Endothelial cell of umbilical vein (primary cell): ENCODE measurements at regions of chr6 and their contacts with region 1.

Region 1: DNA sequence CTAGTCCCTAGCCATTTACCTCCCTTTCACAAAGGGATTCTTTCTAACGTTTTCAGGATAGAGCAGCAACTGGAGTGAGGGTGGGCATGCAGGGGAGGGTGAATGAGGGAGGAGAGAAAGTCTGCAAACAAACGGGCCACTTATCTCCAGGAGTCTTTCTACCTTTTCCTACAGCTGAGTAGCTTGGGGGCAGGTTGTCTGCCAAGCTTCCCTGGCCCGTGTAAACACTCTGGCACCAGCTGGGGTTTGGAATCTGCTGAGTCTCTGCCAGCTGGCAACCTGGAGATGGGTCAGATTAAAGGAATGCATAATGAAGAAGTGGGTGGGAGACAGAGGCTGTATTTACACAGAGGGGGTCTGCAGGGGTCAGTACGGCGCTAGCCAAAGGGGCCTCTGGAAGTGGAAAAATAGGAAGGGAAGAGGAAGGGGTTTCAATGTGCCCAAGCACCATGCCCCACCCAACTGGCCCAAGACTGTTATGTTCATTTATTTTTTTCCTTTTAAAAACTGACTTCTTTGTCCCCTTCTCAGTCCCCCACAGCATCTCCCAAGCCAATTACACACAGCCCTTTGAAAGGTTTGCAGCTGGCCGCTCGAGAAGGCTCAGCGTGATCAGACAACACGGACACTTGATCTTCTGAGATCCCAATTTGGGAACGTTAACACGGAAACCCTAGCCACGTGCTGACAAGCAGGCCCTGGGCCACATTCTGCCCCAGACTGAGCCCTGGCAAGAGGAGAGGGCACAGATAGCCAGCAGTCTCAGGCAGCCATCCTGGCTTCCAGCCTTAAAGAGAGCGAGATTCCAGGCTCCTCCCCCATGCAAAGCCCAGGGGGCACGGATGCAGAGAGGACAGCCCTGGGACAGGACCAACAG is 25.2 kb downstream of the TRAM2 start:
- DNase-seq: peak; percentile 94
- H3K4me3 ChIP-seq: no peak overlapping the region
- H3K27ac ChIP-seq: peak overlapping the region; percentile 82
- H3K4me1 ChIP-seq: peaks cover 60% of the 10 kb centered on the region
- H3K27me3 ChIP-seq: no peaks in the 10 kb centered on the region
- CTCF ChIP-seq: no peak
- POLR2A ChIP-seq: no peak

Region 2: GRCh38 chr6:52512199-52512598 is 39.4 kb before region 1 on chr6:
- CTCF ChIA-PET with region 1: interaction called, 4 read pairs
- POLR2A ChIA-PET with region 1: interaction called, 3 read pairs
- dilution Hi-C with region 1: no loop called
- intact Hi-C with region 1: loop called (anchors 1 kb)
- DNase-seq: peak; percentile 92
- H3K4me3 ChIP-seq: no peak overlapping the region
- H3K27ac ChIP-seq: peak overlapping the region; percentile 89
- H3K4me1 ChIP-seq: peaks cover 64% of the 10 kb centered on the region
- H3K27me3 ChIP-seq: no peaks in the 10 kb centered on the region
- CTCF ChIP-seq: no peak
- POLR2A ChIP-seq: no peak

Region 3: GRCh38 chr6:52537001-52537753 is 14.5 kb before region 1 on chr6:
- CTCF ChIA-PET with region 1: interaction called, 4 read pairs
- POLR2A ChIA-PET with region 1: no interaction called
- dilution Hi-C with region 1: no loop called
- intact Hi-C with region 1: loop called (anchors 1 kb)
- DNase-seq: peak; percentile 78
- H3K4me3 ChIP-seq: no peak overlapping the region
- H3K27ac ChIP-seq: peak overlapping the region; percentile 74
- H3K4me1 ChIP-seq: peaks cover 83% of the 10 kb centered on the region
- H3K27me3 ChIP-seq: no peaks in the 10 kb centered on the region
- CTCF ChIP-seq: no peak
- POLR2A ChIP-seq: peak; percentile 9

Region 4: DNA sequence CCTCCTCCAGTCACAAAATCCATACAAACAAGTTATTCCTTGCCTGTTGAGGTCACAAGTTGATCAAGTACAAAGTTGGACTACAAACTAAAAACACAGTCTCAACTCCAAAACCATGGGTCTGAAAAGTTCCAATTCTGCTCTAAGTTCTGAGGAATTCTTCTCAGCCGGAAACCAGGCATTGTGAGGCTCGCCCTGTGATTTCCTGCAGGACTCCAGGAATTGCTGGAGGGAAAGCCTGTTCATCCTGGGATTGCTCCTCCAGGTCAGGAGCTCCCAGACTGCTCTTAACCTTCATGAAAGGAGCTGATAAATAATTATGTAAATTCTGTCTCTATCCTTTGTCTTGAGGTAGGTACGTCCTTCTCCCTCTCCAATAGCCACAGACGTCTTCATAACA is 16.7 kb after region 1 on chr6:
- CTCF ChIA-PET with region 1: interaction called, 9 read pairs
- POLR2A ChIA-PET with region 1: interaction called, 5 read pairs
- dilution Hi-C with region 1: no loop called
- intact Hi-C with region 1: loop called (anchors 1 kb)
- DNase-seq: peak; percentile 94
- H3K4me3 ChIP-seq: peak overlapping the region in 1 of 3 experiments; percentile 6
- H3K27ac ChIP-seq: peak overlapping the region; percentile 76
- H3K4me1 ChIP-seq: peaks cover 75% of the 10 kb centered on the region
- H3K27me3 ChIP-seq: no peaks in the 10 kb centered on the region
- CTCF ChIP-seq: no peak
- POLR2A ChIP-seq: peak; percentile 63

Region 5: GRCh38 chr6:52712136-52712535 is 160.5 kb after region 1 on chr6:
- CTCF ChIA-PET with region 1: no interaction called
- POLR2A ChIA-PET with region 1: no interaction called
- dilution Hi-C with region 1: no loop called
- intact Hi-C with region 1: no loop called
- DNase-seq: no peak
- H3K4me3 ChIP-seq: no peak overlapping the region
- H3K27ac ChIP-seq: no peak overlapping the region
- H3K4me1 ChIP-seq: no peaks in the 10 kb centered on the region
- H3K27me3 ChIP-seq: no peaks in the 10 kb centered on the region
- CTCF ChIP-seq: no peak
- POLR2A ChIP-seq: no peak